ENCODE measurements at regions of chr19 and their contacts with region 1.

Region 1: GRCh38 chr19:41310033-41310758 is at the start of gene CCDC97:
- DNase-seq: peak; percentile 97
- ATAC-seq: peak; percentile 77
- H3K4me3 ChIP-seq: peak within 1 kb of the TSS; percentile 59 to 100 (median 68)
- H3K4me3 Mint-ChIP-seq: peak within 1 kb of the TSS; percentile 98
- H3K27ac ChIP-seq: peak within 1 kb of the TSS; percentile 89 to 100
- H3K27ac Mint-ChIP-seq: peak within 1 kb of the TSS; percentile 100
- H3K4me1 ChIP-seq: peaks cover 49 to 62% of the 10 kb centered on the region in 2 donors
- H3K4me1 Mint-ChIP-seq: peaks cover 64% of the 10 kb centered on the region
- H3K27me3 ChIP-seq: no peaks in the 10 kb centered on the region
- H3K27me3 Mint-ChIP-seq: no peaks in the 10 kb centered on the region
- CTCF ChIP-seq: no peak
- total RNA-seq, gene CCDC97: 68.3 and 78.3 TPM in 2 replicates

Region 2: GRCh38 chr19:41123716-41124294 is 186.4 kb before region 1 on chr19:
- CTCF ChIA-PET with region 1: interaction called, 4 read pairs
- POLR2A ChIA-PET with region 1: no interaction called
- intact Hi-C with region 1: loop called (anchors 1 kb)
- DNase-seq: no peak
- ATAC-seq: no peak
- H3K4me3 ChIP-seq: no peak overlapping the region
- H3K4me3 Mint-ChIP-seq: no peak overlapping the region
- H3K27ac ChIP-seq: no peak overlapping the region
- H3K27ac Mint-ChIP-seq: no peak overlapping the region
- H3K4me1 ChIP-seq: peaks cover 6 to 16% of the 10 kb centered on the region in 2 donors
- H3K4me1 Mint-ChIP-seq: peaks cover 20% of the 10 kb centered on the region
- H3K27me3 ChIP-seq: peaks cover 0 to 3% (median 0%) of the 10 kb centered on the region in 4 experiments
- H3K27me3 Mint-ChIP-seq: peaks cover 13% of the 10 kb centered on the region
- CTCF ChIP-seq: no peak

Region 3: DNA sequence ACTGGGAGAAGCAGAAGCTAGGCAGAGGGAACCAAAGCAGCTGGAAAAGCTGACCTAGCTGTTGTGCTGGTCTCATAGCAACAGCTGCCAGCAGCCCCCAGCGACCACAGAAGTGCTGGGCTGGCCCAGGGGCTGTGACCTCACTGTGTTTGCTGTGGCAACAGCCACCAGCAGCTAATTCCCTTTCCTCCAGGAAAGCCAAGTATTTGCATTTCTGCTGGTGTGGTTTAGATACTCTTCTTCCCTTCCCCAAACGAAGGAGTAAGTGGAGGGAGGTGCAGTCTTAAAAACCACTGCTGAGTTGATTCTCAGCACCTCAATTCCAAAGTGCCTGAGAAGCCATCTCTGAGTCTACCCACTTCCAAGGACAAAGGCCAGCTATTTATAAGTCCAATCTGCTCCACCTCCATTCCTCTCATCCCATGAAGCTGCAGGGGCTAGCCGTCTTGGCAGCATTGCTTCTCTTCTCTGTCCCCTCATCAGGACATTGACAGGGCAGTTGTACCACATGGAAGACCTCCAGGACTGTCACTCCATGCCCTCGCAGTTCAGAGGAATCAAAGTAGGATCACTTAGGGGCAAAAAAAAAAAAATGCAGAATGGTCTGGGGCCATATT is 11.7 kb before region 1 on chr19:
- CTCF ChIA-PET with region 1: interaction called, 41 read pairs
- POLR2A ChIA-PET with region 1: interaction called, 5 read pairs
- intact Hi-C with region 1: loop called (anchors 1 kb)
- DNase-seq: peak; percentile 85
- ATAC-seq: peak; percentile 25
- H3K4me3 ChIP-seq: no peak overlapping the region
- H3K4me3 Mint-ChIP-seq: peak overlapping the region; percentile 86
- H3K27ac ChIP-seq: peak overlapping the region; percentile 83 to 100
- H3K27ac Mint-ChIP-seq: peak overlapping the region; percentile 98
- H3K4me1 ChIP-seq: peaks cover 58 to 65% of the 10 kb centered on the region in 2 donors
- H3K4me1 Mint-ChIP-seq: peaks cover 71% of the 10 kb centered on the region
- H3K27me3 ChIP-seq: no peaks in the 10 kb centered on the region
- H3K27me3 Mint-ChIP-seq: no peaks in the 10 kb centered on the region
- CTCF ChIP-seq: no peak

Region 4: GRCh38 chr19:41353466-41354342 is 43.5 kb after region 1 on chr19 and contains the start of gene TGFB1:
- CTCF ChIA-PET with region 1: interaction called, 53 read pairs
- POLR2A ChIA-PET with region 1: interaction called, 4 read pairs
- intact Hi-C with region 1: loop called (anchors 1 kb)
- DNase-seq: peak; percentile 97
- ATAC-seq: peak; percentile 72
- H3K4me3 ChIP-seq: peak within 1 kb of the TSS; percentile 67 to 100 (median 92)
- H3K4me3 Mint-ChIP-seq: peak within 1 kb of the TSS; percentile 93
- H3K27ac ChIP-seq: peak within 1 kb of the TSS; percentile 79 to 91
- H3K27ac Mint-ChIP-seq: peak within 1 kb of the TSS; percentile 92
- H3K4me1 ChIP-seq: peaks cover 26 to 30% of the 10 kb centered on the region in 2 donors
- H3K4me1 Mint-ChIP-seq: peaks cover 44% of the 10 kb centered on the region
- H3K27me3 ChIP-seq: no peaks in the 10 kb centered on the region
- H3K27me3 Mint-ChIP-seq: no peaks in the 10 kb centered on the region
- CTCF ChIP-seq: peak; percentile 84
- total RNA-seq, gene TGFB1: 120 TPM in 2 replicates

Region 5: GRCh38 chr19:41397086-41398049 is 87.2 kb after region 1 on chr19 and contains the starts of genes BCKDHA and EXOSC5:
- CTCF ChIA-PET with region 1: no interaction called
- POLR2A ChIA-PET with region 1: no interaction called
- intact Hi-C with region 1: loop called (anchors 1 kb)
- DNase-seq: peak; percentile 100
- ATAC-seq: peak; percentile 98
- H3K4me3 ChIP-seq: peak within 1 kb of the TSS; percentile 84 to 100 (median 90)
- H3K4me3 Mint-ChIP-seq: peak within 1 kb of the TSS; percentile 96
- H3K27ac ChIP-seq: peak within 1 kb of the TSS; percentile 94 to 96
- H3K27ac Mint-ChIP-seq: peak within 1 kb of the TSS; percentile 99
- H3K4me1 ChIP-seq: peaks cover 27 to 28% of the 10 kb centered on the region in 2 donors
- H3K4me1 Mint-ChIP-seq: peaks cover 45% of the 10 kb centered on the region
- H3K27me3 ChIP-seq: no peaks in the 10 kb centered on the region
- H3K27me3 Mint-ChIP-seq: no peaks in the 10 kb centered on the region
- CTCF ChIP-seq: no peak
- total RNA-seq, gene BCKDHA: 20.6 and 25.2 TPM in 2 replicates
- total RNA-seq, gene EXOSC5: 14.1 and 16.1 TPM in 2 replicates

Region 6: GRCh38 chr19:41597600-41598041 is 287.4 kb after region 1 on chr19:
- CTCF ChIA-PET with region 1: interaction called, 18 read pairs
- POLR2A ChIA-PET with region 1: no interaction called
- intact Hi-C with region 1: no loop called
- DNase-seq: peak; percentile 91
- ATAC-seq: peak; percentile 95
- H3K4me3 ChIP-seq: no peak overlapping the region
- H3K4me3 Mint-ChIP-seq: no peak overlapping the region
- H3K27ac ChIP-seq: no peak overlapping the region
- H3K27ac Mint-ChIP-seq: peak overlapping the region; percentile 42
- H3K4me1 ChIP-seq: peaks cover 0 to 19% of the 10 kb centered on the region in 2 donors
- H3K4me1 Mint-ChIP-seq: peaks cover 14% of the 10 kb centered on the region
- H3K27me3 ChIP-seq: peaks cover 0 to 3% (median 0%) of the 10 kb centered on the region in 4 experiments
- H3K27me3 Mint-ChIP-seq: peaks cover 12% of the 10 kb centered on the region
- CTCF ChIP-seq: peak; percentile 93